ENCODE measurements at regions of chr11 and their contacts with region 1.

Region 1: DNA sequence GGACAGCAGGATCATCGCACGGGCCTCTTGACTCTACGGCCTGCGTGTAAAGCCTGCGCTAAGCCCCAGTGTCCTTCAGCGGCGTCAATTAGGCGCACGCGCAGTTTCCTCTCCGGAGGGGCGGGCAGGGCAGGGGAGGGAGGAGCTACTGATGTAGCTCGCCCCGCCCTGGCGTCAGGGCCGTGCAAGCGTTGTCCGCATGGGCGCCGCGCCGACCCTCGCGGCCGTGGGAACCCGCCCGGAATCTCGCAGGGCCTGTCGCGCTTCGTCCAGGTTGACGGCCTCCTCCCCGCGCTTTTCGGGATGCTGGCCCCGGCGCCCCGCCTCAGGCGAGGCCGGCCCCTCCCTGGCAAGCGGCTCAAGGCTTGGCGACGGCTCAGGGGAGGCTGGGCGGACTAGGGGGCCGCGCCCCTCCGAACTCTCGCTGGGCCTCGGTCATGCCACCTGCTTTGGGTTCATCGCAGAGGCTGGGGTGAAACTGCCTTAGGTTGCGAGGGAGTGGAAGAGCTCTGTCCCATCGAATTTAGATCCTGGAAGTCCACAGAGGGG is 61.1 kb downstream of the ST3GAL4 start:
- DNase-seq: peak; percentile 96
- H3K4me3 ChIP-seq: peak overlapping the region; percentile 26 to 52 (median 49)
- H3K27ac ChIP-seq: peak overlapping the region; percentile 82 to 86 (median 84)
- H3K4me1 ChIP-seq: peaks cover 0 to 47% (median 39%) of the 10 kb centered on the region in 4 donors
- H3K27me3 ChIP-seq: no peaks in the 10 kb centered on the region
- CTCF ChIP-seq: no peak
- EP300 ChIP-seq: no peak
- POLR2A ChIP-seq: peak in 1 of 2 donors; percentile 37

Region 2: DNA sequence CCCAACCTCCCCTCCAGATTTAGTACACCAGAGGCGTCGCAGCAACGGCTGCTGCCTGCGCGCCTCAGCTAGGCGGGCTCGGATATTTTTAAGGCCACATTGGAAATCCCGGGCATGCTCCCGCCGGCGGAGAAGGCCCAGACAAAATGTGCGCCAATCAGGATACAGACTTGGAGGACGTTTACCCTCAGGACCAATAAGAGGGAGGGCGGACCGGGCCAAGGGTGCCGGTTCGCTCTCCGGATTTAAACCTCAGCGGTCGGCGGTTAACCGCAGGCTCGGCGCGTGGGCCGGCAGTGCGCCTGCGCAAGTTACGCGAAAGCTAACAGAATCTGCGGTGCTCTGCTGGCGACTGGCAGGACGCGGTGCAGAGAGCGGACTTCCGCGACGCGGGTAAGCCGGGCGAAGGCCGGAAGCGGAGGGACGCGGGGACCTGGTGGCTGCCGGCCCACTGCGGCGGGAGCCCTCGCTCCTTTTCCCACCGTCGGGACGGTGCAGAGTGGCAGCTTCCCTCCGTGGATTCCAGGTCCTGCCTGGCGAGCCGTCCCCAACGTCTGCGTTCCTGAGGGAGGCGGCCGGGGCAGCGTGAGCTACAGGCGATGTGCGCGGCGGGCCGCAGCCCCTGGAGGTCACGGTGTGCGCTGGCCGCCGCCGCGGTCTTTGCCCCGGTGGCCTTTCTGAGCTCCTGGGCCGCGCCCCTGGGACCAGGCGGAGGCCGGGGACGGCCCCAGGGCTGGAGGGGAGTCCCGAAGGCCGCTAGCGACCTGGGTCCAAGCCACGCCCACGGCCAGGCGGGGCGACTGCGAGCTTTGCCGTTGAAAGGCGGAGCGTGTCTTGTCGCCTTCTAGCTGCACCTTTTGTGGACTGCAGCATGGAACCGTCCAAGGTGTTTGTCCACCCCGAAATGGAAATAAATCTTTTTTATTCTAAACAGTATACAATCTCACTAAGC is 529.0 kb before region 1 on chr11 and contains the start of gene HYLS1:
- intact Hi-C with region 1: loop called (anchors 10 kb)
- DNase-seq: peak; percentile 98
- H3K4me3 ChIP-seq: peak within 1 kb of the TSS; percentile 59 to 88 (median 70)
- H3K27ac ChIP-seq: peak within 1 kb of the TSS; percentile 93 to 99 (median 96)
- H3K4me1 ChIP-seq: peaks cover 0 to 13% (median 5%) of the 10 kb centered on the region in 4 donors
- H3K27me3 ChIP-seq: no peaks in the 10 kb centered on the region
- CTCF ChIP-seq: peak in 1 of 4 experiments; percentile 19
- EP300 ChIP-seq: peak in 1 of 4 donors; percentile 24
- POLR2A ChIP-seq: peak; percentile 30 to 48
- total RNA-seq, gene HYLS1: 6.1 to 8.7 (median 6.9) TPM

Region 3: GRCh38 chr11:126115816-126116331 is 300.7 kb before region 1 on chr11:
- intact Hi-C with region 1: loop called (anchors 10 kb)
- DNase-seq: peak; percentile 92
- H3K4me3 ChIP-seq: no peak overlapping the region
- H3K27ac ChIP-seq: peak overlapping the region; percentile 85 to 91 (median 89)
- H3K4me1 ChIP-seq: peaks cover 0 to 63% (median 60%) of the 10 kb centered on the region in 4 donors
- H3K27me3 ChIP-seq: no peaks in the 10 kb centered on the region
- CTCF ChIP-seq: peak in 3 of 4 experiments; percentile 8 to 33 (median 28)
- EP300 ChIP-seq: peak in 2 of 4 donors; percentile 74 to 77
- POLR2A ChIP-seq: no peak

Region 4: DNA sequence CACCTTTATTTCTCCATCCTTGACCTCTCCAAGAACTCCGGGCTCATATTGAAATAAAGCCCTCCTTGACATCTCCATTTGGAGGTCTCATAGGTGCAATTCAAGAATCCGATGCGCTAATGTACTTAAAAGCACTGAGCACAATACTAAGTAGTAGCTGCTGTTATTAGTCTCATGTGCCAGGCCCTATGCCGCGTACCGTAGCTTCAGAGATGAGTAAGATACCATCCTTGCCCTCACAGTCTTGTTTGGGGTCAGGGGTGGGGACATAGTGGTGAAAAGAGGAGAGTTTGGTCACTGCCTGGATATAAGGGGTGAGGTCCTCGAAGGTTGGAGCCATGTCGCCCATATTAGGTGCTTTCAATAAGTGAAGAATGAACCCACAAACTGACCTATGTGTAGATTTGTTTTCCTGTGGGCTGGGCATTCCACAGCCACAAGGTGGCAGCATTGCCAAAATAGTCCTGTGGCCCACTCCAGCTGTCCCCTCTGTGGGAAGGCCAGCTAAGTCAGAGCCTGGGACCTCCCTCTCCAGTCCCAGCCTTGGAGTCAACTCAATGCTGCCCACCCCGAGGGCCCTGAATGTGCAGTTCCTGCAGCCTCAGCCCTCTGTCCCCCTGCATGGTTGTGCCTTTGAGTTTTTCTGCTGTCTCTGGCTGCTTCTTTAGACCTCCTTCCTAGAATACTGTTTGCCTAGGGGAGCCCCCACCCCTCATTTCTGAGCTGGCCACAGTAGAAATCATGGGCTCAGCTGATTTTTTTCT is 106.2 kb before region 1 on chr11:
- intact Hi-C with region 1: loop called (anchors 5 kb)
- DNase-seq: peak; percentile 86
- H3K4me3 ChIP-seq: no peak overlapping the region
- H3K27ac ChIP-seq: peak overlapping the region in 2 of 4 donors; percentile 10 to 15
- H3K4me1 ChIP-seq: peaks cover 0 to 10% (median 9%) of the 10 kb centered on the region in 4 donors
- H3K27me3 ChIP-seq: no peaks in the 10 kb centered on the region
- CTCF ChIP-seq: peak; percentile 53 to 87 (median 76)
- EP300 ChIP-seq: no peak
- POLR2A ChIP-seq: no peak

Region 5: DNA sequence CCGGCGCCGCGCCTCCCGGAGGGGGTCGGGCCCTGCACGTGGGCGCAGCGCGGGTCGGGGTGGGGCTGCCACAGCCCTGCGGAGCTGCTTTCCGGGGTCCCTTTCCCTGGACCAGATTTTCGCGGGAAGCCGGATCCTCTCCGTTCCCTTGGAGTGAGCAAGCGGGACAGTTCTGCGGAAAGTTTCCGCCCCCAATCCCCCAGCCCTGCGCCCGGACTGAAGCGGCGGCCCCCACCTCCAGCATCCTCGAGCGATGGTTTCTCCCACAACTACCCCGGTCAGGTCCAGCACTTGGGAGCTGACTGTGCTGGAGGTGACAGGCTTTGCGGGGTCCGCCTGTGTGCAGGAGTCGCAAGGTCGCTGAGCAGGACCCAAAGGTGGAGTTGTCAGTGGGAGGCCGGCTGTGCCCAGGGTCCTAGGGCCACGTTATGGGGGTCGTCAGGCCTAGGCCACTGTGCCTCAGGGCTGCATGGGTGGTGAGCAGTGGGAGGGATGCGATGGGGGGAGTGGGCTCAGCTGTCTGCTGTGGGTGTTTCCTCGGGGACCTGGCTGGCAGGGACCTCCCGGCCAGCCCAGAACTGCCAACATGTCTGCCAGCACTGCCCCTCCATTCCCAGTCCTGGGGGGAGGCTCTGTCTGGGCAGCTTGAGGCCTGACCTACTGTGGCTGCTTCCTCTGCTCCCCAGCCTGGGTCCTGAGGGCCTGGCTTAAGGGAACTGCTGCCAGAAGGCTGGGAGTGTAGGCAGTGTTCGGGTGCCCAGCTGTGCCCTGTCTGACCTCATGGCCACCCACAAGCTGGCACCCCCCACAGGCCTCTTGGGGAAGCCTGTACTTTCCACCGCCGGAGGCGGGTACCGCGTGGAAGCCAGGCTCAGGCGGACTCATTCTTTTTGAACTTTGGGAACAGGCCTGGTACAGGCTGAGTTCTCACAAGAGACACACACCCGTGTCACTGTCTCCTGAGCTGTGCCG is 60.4 kb before region 1 on chr11:
- intact Hi-C with region 1: loop called (anchors 2 kb)
- DNase-seq: peak; percentile 80
- H3K4me3 ChIP-seq: peak overlapping the region; percentile 67 to 82 (median 78)
- H3K27ac ChIP-seq: peak overlapping the region; percentile 86 to 90 (median 87)
- H3K4me1 ChIP-seq: peaks cover 0 to 86% (median 77%) of the 10 kb centered on the region in 4 donors
- H3K27me3 ChIP-seq: no peaks in the 10 kb centered on the region
- CTCF ChIP-seq: no peak
- EP300 ChIP-seq: no peak
- POLR2A ChIP-seq: no peak

Measured in sigmoid colon (tissue), 7 donors.